ENCODE measurements at regions of chr1 and their contacts with region 1.

Region 1: DNA sequence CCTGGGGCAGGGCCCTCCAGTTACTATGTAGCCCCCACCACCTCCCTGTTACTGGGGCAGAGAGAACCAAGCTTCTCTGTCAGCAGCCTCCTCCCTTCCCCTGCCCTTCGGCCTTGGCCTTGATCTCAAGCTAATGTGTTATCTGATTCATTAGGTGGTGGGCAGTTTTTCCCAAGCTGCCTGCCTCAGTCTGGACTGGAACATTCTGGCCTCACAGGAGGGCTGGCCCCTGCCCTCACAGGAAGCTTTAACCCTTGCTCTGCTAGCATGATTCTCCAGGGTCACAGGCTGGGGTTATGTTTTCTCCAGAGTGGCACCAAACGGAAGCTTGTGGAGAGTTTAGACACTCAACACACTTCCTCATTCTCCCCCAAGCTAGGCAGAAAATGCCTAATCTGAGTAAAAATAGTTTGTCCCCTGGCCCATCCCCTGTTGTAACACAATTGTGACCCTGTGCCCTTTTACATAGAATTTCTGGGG is 37.2 kb upstream of the SLC6A9 start:
- DNase-seq: peak; percentile 42 to 87 (median 79)
- H3K4me3 ChIP-seq: peak overlapping the region in 3 of 7 experiments; percentile 2 to 33 (median 4)
- H3K27ac ChIP-seq: peak overlapping the region in 1 of 2 experiments; percentile 15
- H3K4me1 ChIP-seq: peaks cover 11 to 38% (median 29%) of the 10 kb centered on the region in 4 experiments
- H3K27me3 ChIP-seq: no peaks in the 10 kb centered on the region

Region 2: DNA sequence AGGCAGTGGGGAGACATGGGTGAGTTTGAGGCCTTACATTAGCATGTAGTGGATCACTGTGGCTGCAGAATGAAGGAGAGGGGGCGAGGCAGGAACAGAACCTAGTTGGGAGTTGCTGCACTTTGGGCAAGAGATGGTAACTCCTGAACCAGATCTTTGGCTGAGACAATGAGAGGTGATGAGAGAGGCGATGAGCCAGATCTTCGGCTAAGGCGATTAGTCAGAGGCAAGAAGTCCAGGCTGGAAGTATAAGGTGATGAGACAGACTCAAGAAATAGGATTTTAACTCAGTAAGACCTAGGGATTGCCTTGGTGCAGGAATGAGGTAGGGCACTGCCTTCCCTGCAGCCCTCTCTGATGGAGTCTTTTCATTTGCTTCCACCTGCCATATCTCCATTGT is 144.0 kb before region 1 on chr1:
- CTCF ChIA-PET with region 1: no interaction called
- POLR2A ChIA-PET with region 1: no interaction called
- DNase-seq: no peak
- H3K4me3 ChIP-seq: no peak overlapping the region
- H3K27ac ChIP-seq: no peak overlapping the region
- H3K4me1 ChIP-seq: peaks cover 0 to 3% (median 0%) of the 10 kb centered on the region in 4 experiments
- H3K27me3 ChIP-seq: no peaks in the 10 kb centered on the region

Region 3: DNA sequence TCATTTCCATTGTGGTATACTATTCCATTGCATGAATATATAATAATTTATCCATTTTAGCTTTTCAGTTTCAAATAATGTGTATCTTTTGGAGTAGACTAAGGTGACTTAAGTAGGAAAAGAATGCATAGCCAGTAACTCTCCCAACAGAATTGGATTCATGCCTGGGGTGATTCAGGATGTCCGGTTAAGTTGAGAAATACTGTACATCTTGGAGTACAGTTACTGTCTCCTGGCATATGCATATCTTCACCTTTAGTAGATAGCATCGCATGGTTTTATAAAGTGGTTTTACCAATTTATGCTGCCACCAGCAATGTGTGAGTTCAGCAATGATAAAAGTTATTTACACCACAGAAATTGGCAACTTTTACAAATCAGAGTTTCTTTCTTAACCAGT is 18.6 kb before region 1 on chr1:
- CTCF ChIA-PET with region 1: interaction called, 13 read pairs
- POLR2A ChIA-PET with region 1: interaction called, 5 read pairs
- DNase-seq: no peak
- H3K4me3 ChIP-seq: no peak overlapping the region
- H3K27ac ChIP-seq: no peak overlapping the region
- H3K4me1 ChIP-seq: peaks cover 5 to 29% (median 20%) of the 10 kb centered on the region in 4 experiments
- H3K27me3 ChIP-seq: no peaks in the 10 kb centered on the region

Region 4: DNA sequence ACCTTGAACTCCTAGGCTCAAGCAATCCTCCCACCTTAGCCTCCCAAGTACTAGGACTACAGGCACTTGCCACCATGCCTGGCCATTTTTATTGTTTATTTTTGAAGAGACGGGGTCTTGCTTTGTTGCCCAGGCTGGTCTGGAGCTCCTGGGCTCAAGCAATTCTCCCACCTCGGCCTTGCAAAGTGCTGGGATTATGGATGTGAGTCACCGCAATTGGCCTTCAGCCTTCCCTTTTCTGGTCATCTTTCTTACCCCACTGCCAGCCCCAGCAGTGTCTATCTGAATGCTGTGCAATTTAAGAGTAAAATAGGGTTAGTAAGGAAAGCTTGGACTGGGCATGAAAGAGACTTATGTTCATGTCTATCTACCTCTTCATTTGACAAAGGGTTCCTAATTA is 44.0 kb after region 1 on chr1:
- CTCF ChIA-PET with region 1: no interaction called
- POLR2A ChIA-PET with region 1: no interaction called
- DNase-seq: no peak
- H3K4me3 ChIP-seq: no peak overlapping the region
- H3K27ac ChIP-seq: no peak overlapping the region
- H3K4me1 ChIP-seq: no peaks in the 10 kb centered on the region
- H3K27me3 ChIP-seq: no peaks in the 10 kb centered on the region